ENCODE measurements at regions of chr2 and their contacts with region 1.

Region 1: DNA sequence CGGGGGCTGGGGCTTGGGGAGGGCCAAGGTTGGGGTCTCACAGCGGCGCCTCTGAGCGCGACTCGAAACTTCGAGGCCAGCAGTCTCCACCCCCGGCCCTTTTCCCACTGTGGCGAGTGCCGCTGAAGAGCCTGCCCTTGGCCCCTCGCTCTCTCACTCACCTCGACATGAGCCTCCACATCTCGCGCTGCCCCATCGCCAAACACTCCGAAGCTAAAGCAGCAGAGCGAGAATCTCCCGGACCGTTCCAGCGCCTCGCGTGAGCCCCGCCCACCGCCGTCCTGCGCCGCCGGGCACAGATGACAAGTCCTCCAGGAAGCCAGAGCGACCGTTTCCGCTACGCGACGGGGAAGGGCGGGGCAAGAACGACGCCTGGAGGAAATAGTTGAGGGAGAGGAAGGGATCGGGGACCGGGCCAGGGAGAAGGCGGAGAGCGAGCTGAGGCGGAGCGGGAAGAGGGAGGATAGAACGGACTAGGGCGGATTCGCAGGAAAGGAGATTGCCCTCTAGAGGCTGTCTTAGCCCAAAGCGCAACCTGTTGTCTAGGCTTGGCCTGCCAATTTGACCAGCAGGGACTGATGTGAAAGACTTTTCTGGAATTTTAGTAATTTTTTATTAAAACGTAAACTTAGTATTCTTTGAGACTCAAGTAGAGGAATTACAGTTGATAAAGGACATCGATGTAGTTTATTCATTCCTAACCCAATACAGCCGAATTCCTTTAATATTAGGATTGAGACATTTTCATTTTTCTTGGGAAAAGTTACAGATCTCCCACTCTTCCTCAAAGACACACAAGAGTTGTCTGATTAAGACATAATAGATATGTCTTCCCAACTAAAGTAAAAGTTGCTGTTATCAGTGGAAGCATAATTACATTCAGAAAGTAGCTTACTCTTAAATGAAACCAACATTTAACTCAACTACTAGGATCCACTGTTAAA is at the start of gene HIBCH:
- DNase-seq: peak; percentile 98
- H3K4me3 ChIP-seq: peak within 1 kb of the TSS; percentile 56 to 78 (median 60)
- H3K27ac ChIP-seq: peak within 1 kb of the TSS; percentile 14
- H3K4me1 ChIP-seq: peaks cover 18% of the 10 kb centered on the region
- H3K27me3 ChIP-seq: no peaks in the 10 kb centered on the region
- CTCF ChIP-seq: peak; percentile 80 to 83
- POLR2A ChIP-seq: peak; percentile 66
- total RNA-seq, gene HIBCH: 23.2 and 24.7 TPM in 2 replicates

Region 2: DNA sequence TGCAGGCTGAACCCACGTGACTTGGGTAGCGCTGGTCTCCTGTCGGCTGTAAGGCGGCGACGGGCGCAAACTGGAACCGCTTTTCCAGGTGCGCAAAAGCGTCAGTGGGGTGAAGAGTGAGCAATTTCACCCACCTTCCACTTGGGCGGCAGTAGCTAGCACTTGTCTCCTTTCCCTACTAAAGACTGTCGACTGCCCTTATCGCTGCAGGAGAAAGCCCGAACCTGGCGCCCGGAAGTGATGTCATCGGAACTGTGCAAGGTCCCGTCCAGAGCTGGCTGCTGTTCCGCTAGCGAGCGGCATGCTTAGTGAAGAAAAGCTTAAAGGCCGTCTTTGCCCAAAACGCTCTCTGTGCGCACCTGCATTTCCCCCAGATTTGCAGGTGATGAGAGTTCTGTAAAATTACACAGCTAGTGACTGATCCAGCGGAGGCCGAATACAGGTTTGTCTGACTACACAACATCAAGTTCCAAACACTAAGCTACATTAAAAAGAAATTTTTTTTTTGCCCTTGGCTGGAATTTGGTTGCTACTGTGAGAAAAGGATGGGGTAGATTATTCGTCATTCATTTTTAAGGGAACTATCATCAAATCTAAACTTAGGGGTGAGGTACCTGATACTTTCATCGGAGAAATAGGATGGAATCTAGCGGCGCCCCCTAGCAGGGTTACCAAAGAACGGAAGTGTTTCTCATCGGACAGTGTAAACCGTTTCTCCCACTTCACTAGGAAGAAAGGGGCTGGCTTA is 557.1 kb before region 1 on chr2 and contains the start of gene OSGEPL1:
- CTCF ChIA-PET with region 1: no interaction called
- POLR2A ChIA-PET with region 1: no interaction called
- dilution Hi-C with region 1: no loop called
- intact Hi-C with region 1: loop called (anchors 2 kb)
- DNase-seq: peak; percentile 93
- H3K4me3 ChIP-seq: peak within 1 kb of the TSS; percentile 85 to 97 (median 85)
- H3K27ac ChIP-seq: peak within 1 kb of the TSS; percentile 75
- H3K4me1 ChIP-seq: peaks cover 11% of the 10 kb centered on the region
- H3K27me3 ChIP-seq: no peaks in the 10 kb centered on the region
- CTCF ChIP-seq: peak; percentile 45 to 49
- POLR2A ChIP-seq: peak; percentile 53
- total RNA-seq, gene OSGEPL1: 5.4 and 5.9 TPM in 2 replicates

Region 3: GRCh38 chr2:190088917-190089316 is 230.9 kb before region 1 on chr2:
- CTCF ChIA-PET with region 1: interaction called, 14 read pairs
- POLR2A ChIA-PET with region 1: no interaction called
- dilution Hi-C with region 1: no loop called
- intact Hi-C with region 1: no loop called
- DNase-seq: peak; percentile 72
- H3K4me3 ChIP-seq: no peak overlapping the region
- H3K27ac ChIP-seq: no peak overlapping the region
- H3K4me1 ChIP-seq: no peaks in the 10 kb centered on the region
- H3K27me3 ChIP-seq: peaks cover 2 to 3% of the 10 kb centered on the region in 2 experiments
- CTCF ChIP-seq: peak; percentile 49
- POLR2A ChIP-seq: no peak

Region 4: GRCh38 chr2:190334479-190335224 is 14.8 kb after region 1 on chr2:
- CTCF ChIA-PET with region 1: interaction called, 25 read pairs
- POLR2A ChIA-PET with region 1: no interaction called
- dilution Hi-C with region 1: no loop called
- intact Hi-C with region 1: loop called (anchors 1 kb)
- DNase-seq: peak; percentile 87
- H3K4me3 ChIP-seq: peak overlapping the region in 1 of 3 experiments; percentile 41
- H3K27ac ChIP-seq: peak overlapping the region; percentile 77
- H3K4me1 ChIP-seq: peaks cover 25% of the 10 kb centered on the region
- H3K27me3 ChIP-seq: no peaks in the 10 kb centered on the region
- CTCF ChIP-seq: no peak
- POLR2A ChIP-seq: peak; percentile 49

Region 5: DNA sequence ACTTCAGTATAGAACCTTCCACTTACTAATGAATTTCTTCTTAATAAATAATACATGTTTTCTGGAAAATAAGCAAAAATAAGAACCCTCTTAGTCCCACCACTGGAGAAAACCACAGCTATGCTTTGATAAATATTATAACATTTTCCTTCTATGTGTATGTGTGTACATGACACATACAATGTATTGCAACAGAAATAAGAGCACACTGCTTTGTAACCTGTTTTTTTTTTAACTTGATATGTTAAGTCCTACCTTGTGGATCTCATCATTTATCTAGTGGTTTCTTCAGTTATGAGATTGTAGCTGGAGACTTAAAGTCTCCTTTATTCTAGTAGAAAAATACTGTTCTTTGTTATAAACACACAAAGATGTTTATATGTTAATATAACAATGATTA is 40.7 kb after region 1 on chr2:
- CTCF ChIA-PET with region 1: interaction called, 10 read pairs
- POLR2A ChIA-PET with region 1: no interaction called
- dilution Hi-C with region 1: no loop called
- intact Hi-C with region 1: no loop called
- DNase-seq: no peak
- H3K4me3 ChIP-seq: no peak overlapping the region
- H3K27ac ChIP-seq: no peak overlapping the region
- H3K4me1 ChIP-seq: peaks cover 5% of the 10 kb centered on the region
- H3K27me3 ChIP-seq: no peaks in the 10 kb centered on the region
- CTCF ChIP-seq: no peak
- POLR2A ChIP-seq: no peak

Region 6: DNA sequence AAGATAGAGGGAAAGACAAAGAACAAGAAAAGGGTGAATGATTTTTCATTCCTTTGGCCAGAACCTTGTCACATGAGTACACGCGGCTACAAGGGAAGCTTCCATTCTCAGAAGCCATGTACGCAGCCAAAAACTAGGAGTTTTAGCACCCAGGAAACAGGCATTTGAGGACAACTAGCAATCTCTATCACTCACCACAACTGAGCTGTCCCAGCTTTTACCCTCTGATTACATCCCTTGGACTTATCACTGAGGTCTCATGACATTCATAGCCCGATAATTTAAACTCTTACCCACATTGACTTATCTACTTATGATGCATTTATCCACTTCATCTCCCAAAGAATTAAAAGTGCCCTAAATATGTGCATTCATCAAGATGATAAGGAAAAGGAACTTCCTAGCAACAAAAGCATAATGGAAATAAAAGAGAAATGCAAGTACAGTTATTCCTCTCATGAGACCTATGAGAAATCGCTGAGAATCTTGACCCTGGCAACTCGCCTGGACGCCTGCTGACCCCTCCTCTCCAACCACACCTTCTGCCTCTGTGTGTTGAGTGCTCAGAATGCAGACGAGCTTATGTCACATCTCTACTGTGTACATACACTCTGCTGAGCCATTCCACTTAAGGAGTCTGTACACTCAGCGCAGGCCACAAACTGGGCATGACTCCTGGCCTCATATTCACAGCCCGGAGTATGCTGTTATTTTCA is 59.6 kb after region 1 on chr2:
- CTCF ChIA-PET with region 1: no interaction called
- POLR2A ChIA-PET with region 1: no interaction called
- dilution Hi-C with region 1: no loop called
- intact Hi-C with region 1: no loop called
- DNase-seq: no peak
- H3K4me3 ChIP-seq: no peak overlapping the region
- H3K27ac ChIP-seq: no peak overlapping the region
- H3K4me1 ChIP-seq: no peaks in the 10 kb centered on the region
- H3K27me3 ChIP-seq: peaks cover 0 to 4% of the 10 kb centered on the region in 2 experiments
- CTCF ChIP-seq: no peak
- POLR2A ChIP-seq: no peak

Region 7: DNA sequence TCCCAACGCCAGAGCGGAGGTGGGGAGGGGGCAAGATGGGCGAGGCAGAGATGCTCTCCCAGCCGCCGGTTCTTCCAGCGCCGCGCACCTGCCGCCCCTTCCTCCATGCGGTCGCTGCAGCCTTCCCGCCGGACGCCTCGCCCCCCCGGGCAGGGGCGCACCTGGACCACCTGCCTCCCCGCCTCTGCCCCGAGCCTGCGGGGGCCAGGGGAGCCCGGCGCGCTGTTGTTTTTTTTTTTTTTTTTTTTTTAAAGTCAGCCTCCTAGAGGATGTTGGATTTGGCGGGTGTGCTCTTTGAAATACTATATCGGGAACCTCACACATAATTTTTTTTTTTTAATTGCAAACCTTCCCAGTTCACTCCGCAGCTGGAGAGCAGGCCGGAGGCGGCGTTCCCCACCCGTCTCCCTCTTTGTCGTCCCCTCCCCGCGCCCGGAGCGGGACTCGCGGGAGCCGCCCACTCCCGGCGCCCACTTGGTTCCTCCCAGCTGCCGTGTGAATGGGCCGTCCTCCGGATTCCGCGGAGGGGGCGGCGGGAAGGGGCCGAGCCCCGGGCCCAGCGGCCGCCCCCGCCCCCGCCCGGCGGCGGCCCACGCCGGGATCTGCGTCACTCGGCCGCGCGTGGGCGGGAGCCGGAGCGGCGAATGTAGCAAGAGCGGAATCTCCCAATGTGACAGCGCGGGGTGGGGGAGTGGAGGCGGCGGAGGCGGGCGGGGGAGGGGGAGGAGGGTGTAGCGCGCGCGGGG is 328.6 kb after region 1 on chr2:
- CTCF ChIA-PET with region 1: no interaction called
- POLR2A ChIA-PET with region 1: no interaction called
- dilution Hi-C with region 1: no loop called
- intact Hi-C with region 1: loop called (anchors 5 kb)
- DNase-seq: peak; percentile 83
- H3K4me3 ChIP-seq: peak overlapping the region; percentile 72 to 92 (median 77)
- H3K27ac ChIP-seq: peak overlapping the region; percentile 52
- H3K4me1 ChIP-seq: peaks cover 23% of the 10 kb centered on the region
- H3K27me3 ChIP-seq: no peaks in the 10 kb centered on the region
- CTCF ChIP-seq: no peak
- POLR2A ChIP-seq: peak; percentile 38

Measured in endothelial cell of umbilical vein (primary cell).